AG04449 (cell line): ENCODE measurements at regions of chr7 and their contacts with region 1.

Region 1: DNA sequence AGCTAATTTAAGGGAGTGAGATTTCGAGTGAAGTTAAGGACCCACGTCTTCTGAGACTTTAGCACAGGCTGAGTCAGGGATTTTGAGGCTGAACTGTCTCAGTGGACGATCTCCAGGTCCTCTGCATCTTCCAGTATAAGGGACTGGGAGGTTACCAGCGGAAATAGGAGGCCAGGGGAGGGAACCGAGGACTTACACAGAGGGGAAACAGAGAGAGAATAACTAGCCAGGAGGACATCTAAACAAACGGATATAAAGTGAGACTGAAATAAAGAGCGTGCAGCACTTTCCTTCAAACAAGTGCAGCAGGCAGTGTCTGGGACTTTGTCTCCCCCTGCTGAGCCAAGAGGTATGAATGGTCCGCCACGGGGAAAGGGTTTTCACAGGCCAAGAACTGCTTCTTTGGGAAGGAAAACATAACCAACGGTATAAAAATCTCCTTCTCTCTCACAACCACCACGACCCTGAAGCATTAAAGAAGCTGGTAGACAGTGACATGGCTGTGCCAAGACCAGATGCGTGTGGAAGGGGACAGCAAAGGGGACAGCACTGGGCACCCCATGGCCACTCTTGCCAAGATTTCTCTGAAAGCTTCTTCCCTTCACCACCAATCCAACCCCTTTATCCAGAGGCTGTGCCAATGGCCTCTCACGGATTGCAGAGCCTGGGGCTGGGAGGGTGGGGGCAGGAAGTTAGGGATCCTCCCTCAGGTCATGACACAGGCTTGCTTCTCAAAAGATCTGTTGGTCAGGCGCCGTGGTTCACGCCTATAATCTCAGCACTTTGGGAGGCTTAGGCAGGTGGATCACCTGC is 72.0 kb downstream of the SLC37A3 start:
- DNase-seq: no peak
- H3K4me3 ChIP-seq: no peak overlapping the region
- CTCF ChIP-seq: peak; percentile 77

Region 2: GRCh38 chr7:140175221-140176121 is 150.9 kb before region 1 on chr7:
- CTCF ChIA-PET with region 1: interaction called, 33 read pairs
- POLR2A ChIA-PET with region 1: interaction called, 3 read pairs
- DNase-seq: peak; percentile 68
- H3K4me3 ChIP-seq: peak overlapping the region; percentile 66
- CTCF ChIP-seq: peak; percentile 78

Region 3: GRCh38 chr7:140316165-140316661 is 10.1 kb before region 1 on chr7:
- CTCF ChIA-PET with region 1: interaction called, 20 read pairs
- POLR2A ChIA-PET with region 1: no interaction called
- DNase-seq: no peak
- H3K4me3 ChIP-seq: no peak overlapping the region
- CTCF ChIP-seq: no peak

Region 4: DNA sequence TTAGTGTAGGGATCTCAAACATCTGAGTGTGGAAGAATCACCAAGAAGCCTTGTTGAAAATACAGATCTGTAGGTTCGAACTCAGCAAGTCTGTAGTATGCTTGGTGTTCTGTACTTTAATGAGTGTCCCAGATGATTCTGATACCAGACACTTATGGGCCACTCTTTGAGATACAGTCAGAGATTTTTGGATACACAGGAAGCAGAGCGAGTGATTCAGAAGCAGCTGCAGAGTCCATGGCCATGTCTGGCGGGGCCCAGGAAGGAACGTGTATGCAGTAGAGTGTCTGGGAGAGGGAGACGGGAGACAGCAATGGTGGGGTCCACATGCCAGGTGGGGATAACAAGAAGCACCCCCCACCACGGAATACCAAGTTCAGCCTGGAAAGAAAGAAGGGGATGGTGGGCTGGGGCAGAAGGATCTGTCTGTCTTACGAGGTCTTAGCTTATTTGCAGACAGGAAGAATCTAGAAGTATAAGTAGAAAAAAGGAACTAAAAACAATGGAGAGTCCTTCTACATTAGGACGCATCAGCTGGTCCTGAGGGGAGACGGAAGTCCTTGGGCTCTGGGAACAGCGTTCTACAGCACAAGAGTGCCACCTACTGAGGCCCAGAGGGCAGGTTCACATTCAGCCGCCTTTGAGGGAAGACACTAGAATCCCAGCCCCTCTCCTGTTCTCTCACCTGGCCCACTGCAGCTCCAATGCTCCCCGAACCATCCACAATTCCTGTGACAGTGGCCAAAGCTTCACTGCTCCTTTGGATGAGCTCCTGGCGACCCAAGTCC is 16.6 kb after region 1 on chr7:
- CTCF ChIA-PET with region 1: interaction called, 11 read pairs
- POLR2A ChIA-PET with region 1: interaction called, 3 read pairs
- DNase-seq: no peak
- H3K4me3 ChIP-seq: no peak overlapping the region
- CTCF ChIP-seq: peak; percentile 40

Region 5: GRCh38 chr7:140479062-140479738 is 152.9 kb after region 1 on chr7 and contains the start of gene MKRN1:
- CTCF ChIA-PET with region 1: no interaction called
- POLR2A ChIA-PET with region 1: no interaction called
- DNase-seq: peak; percentile 47
- H3K4me3 ChIP-seq: peak within 1 kb of the TSS; percentile 81
- CTCF ChIP-seq: no peak

Region 6: DNA sequence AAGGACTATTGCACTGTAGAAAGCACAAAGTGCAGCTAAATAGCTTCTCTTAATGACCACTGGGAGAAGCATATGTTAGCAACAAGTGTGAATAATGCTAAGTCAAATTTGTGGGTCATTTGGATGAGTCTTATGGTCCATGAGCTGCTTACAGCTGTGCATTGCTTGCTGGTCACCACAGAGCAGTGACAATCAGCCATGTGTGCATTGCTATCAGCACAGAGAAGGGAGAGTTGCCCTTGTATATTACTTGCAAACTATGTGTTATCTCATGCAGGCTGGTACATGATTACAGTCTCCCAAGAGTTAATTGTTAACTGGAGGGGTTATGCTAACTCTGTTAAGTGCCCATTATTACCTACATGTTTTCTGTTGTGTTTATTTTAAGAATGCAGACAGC is 662.7 kb after region 1 on chr7:
- CTCF ChIA-PET with region 1: no interaction called
- POLR2A ChIA-PET with region 1: no interaction called
- DNase-seq: no peak
- H3K4me3 ChIP-seq: no peak overlapping the region
- CTCF ChIP-seq: no peak